ENCODE measurements at regions of chr18 and their contacts with region 1.

Region 1: GRCh38 chr18:3245853-3246634 is 1.6 kb upstream of the MYL12A start:
- DNase-seq: peak; percentile 92
- ATAC-seq: peak; percentile 70
- H3K4me3 Mint-ChIP-seq: peak overlapping the region; percentile 94
- H3K27ac Mint-ChIP-seq: peak overlapping the region; percentile 98
- H3K4me1 Mint-ChIP-seq: peaks cover 29% of the 10 kb centered on the region
- H3K27me3 Mint-ChIP-seq: no peaks in the 10 kb centered on the region
- CTCF ChIP-seq: peak; percentile 96

Region 2: DNA sequence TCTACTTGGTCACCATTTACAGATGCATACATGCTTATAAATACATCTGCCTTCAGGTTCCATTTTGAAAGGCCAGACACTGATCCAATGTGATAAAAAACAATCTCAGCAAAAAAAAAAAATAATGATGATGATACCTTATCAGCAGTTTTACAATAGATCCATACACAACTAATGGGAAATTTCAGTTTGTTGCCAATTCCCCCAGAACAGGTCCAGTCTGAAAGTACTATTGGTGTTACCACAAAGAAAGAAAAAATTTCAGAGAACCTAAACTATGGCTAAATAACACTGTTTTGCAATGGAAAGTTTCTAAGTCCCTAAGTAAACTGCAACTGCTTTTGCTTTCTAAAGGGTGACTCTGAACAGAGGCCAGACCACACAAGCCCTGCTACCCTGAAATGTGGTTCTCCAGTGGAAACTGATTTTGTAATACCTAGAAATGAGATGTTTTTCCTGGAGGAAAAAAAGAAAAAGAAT is 287.2 kb before region 1 on chr18:
- CTCF ChIA-PET with region 1: interaction called, 3 read pairs
- POLR2A ChIA-PET with region 1: interaction called, 7 read pairs
- intact Hi-C with region 1: loop called (anchors 5 kb)
- DNase-seq: peak; percentile 76
- ATAC-seq: peak; percentile 28
- H3K4me3 Mint-ChIP-seq: peak overlapping the region; percentile 65
- H3K27ac Mint-ChIP-seq: peak overlapping the region; percentile 99
- H3K4me1 Mint-ChIP-seq: peaks cover 84% of the 10 kb centered on the region
- H3K27me3 Mint-ChIP-seq: no peaks in the 10 kb centered on the region
- CTCF ChIP-seq: no peak

Region 3: GRCh38 chr18:2985628-2986027 is 260.4 kb before region 1 on chr18:
- CTCF ChIA-PET with region 1: interaction called, 21 read pairs
- POLR2A ChIA-PET with region 1: interaction called, 3 read pairs
- intact Hi-C with region 1: no loop called
- DNase-seq: peak; percentile 32
- ATAC-seq: peak; percentile 53
- H3K4me3 Mint-ChIP-seq: no peak overlapping the region
- H3K27ac Mint-ChIP-seq: peak overlapping the region; percentile 34
- H3K4me1 Mint-ChIP-seq: peaks cover 72% of the 10 kb centered on the region
- H3K27me3 Mint-ChIP-seq: no peaks in the 10 kb centered on the region
- CTCF ChIP-seq: peak; percentile 74

Region 4: GRCh38 chr18:3151399-3152264 is 94.4 kb before region 1 on chr18:
- CTCF ChIA-PET with region 1: interaction called, 51 read pairs
- POLR2A ChIA-PET with region 1: interaction called, 3 read pairs
- intact Hi-C with region 1: no loop called
- DNase-seq: no peak
- ATAC-seq: no peak
- H3K4me3 Mint-ChIP-seq: no peak overlapping the region
- H3K27ac Mint-ChIP-seq: no peak overlapping the region
- H3K4me1 Mint-ChIP-seq: peaks cover 2% of the 10 kb centered on the region
- H3K27me3 Mint-ChIP-seq: no peaks in the 10 kb centered on the region
- CTCF ChIP-seq: peak; percentile 82

Region 5: DNA sequence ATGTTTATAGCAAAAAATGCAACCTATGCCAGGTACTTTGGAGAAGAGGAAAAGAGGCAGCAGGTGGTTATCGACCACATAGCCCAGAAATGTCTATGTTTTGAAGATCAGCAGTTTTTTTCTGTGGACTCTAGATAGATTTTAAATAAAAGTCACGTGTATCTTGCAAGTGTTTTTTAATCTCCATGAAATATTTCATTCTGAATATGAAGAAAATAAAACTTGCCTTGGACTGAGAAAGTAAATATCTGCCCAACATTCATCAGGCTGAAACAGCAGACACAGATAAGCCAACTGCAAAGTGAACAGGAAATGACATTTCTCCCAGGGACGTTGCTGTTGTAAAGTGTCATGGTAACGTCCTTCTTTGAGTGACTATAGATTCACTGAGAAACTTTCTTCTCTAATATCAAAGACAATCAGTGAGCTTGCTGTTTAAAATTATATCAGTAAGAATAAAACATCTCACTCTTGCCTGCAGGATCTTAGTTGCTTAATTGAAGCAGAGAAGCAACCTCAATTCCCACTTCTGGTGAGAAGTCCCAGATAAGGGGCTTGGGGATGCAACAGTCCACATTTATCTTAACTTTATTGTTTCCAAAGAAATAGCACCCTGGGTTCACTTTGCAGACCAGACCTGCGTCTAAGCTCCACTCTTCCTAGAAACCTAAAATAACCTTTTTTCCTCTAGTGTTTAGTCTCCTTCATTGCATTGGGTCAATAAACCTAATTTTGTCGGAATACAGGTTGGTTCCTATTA is 32.6 kb before region 1 on chr18:
- CTCF ChIA-PET with region 1: interaction called, 15 read pairs
- POLR2A ChIA-PET with region 1: no interaction called
- intact Hi-C with region 1: no loop called
- DNase-seq: peak; percentile 17
- ATAC-seq: peak; percentile 59
- H3K4me3 Mint-ChIP-seq: no peak overlapping the region
- H3K27ac Mint-ChIP-seq: peak overlapping the region; percentile 68
- H3K4me1 Mint-ChIP-seq: peaks cover 24% of the 10 kb centered on the region
- H3K27me3 Mint-ChIP-seq: no peaks in the 10 kb centered on the region
- CTCF ChIP-seq: no peak

Region 6: GRCh38 chr18:3261371-3262246 is 15.6 kb after region 1 on chr18 and contains the start of gene MYL12B:
- CTCF ChIA-PET with region 1: interaction called, 16 read pairs
- POLR2A ChIA-PET with region 1: interaction called, 34 read pairs
- intact Hi-C with region 1: no loop called
- DNase-seq: peak; percentile 85
- ATAC-seq: peak; percentile 81
- H3K4me3 Mint-ChIP-seq: peak within 1 kb of the TSS; percentile 91
- H3K27ac Mint-ChIP-seq: peak within 1 kb of the TSS; percentile 99
- H3K4me1 Mint-ChIP-seq: peaks cover 59% of the 10 kb centered on the region
- H3K27me3 Mint-ChIP-seq: no peaks in the 10 kb centered on the region
- CTCF ChIP-seq: no peak
- total RNA-seq, gene MYL12B: 243 to 264 TPM

Region 7: DNA sequence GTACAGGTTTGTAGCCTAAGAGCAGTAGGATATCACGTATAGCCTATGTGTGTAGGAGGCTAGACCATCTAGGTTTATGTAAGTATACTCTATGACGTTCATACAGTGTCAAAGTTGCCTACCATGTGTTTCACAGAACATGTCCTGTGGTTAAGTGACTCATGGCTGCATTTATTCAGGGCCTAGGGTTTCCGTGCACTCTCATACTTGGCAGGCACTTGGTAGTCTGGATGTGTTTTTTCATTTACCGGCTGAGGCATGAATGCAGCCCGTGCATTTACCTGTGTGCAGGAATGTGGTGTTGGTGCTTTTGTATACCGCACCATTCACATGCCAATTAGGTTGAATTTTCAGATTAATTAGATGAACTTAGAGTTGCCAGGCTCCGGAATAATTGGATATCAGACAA is 59.3 kb after region 1 on chr18:
- CTCF ChIA-PET with region 1: no interaction called
- POLR2A ChIA-PET with region 1: no interaction called
- intact Hi-C with region 1: no loop called
- DNase-seq: peak; percentile 71
- ATAC-seq: peak; percentile 98
- H3K4me3 Mint-ChIP-seq: no peak overlapping the region
- H3K27ac Mint-ChIP-seq: peak overlapping the region; percentile 86
- H3K4me1 Mint-ChIP-seq: peaks cover 17% of the 10 kb centered on the region
- H3K27me3 Mint-ChIP-seq: peaks cover 20% of the 10 kb centered on the region
- CTCF ChIP-seq: no peak

Measured in activated CD8-positive, alpha-beta T cell treated with anti-CD3 and anti-CD28 coated beads for 36 hours (primary cell).